ENCODE measurements at regions of chr4 and their contacts with region 1.

Region 1: GRCh38 chr4:39977489-39978377 is at the start of gene PDS5A:
- DNase-seq: peak; percentile 87 to 91
- H3K4me3 ChIP-seq: peak within 1 kb of the TSS; percentile 90 to 95 (median 95)
- H3K27ac ChIP-seq: peak within 1 kb of the TSS; percentile 96 to 98 (median 98)
- H3K4me1 ChIP-seq: peaks cover 10 to 11% of the 10 kb centered on the region in 2 donors
- H3K27me3 ChIP-seq: no peaks in the 10 kb centered on the region
- CTCF ChIP-seq: peak; percentile 41 to 99 (median 88)
- POLR2A ChIP-seq: peak; percentile 49 to 85
- total RNA-seq, gene PDS5A: 92.3 to 133 (median 103) TPM

Region 2: DNA sequence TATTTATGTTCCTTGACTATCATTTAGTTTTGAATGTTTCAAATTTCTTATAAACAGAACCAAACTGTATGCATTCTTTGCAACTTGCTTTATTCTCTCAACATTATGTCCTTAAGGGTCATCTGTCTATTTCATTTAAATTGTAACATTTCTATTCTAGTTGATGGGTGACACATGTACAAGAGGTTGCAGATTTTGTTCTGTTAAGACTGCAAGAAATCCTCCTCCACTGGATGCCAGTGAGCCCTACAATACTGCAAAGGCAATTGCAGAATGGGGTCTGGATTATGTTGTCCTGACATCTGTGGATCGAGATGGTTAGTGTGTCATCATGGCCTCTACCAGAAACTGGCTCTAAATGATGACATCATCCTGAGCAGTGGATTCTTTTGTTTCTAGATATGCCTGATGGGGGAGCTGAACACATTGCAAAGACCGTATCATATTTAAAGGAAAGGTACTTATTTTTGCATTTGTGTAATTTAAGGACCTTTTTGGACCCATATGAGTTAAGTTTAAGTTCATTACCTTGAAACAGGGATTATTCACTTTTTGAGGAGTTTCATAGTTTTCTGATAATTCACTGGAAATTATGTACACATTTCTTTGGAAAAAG is 512.7 kb before region 1 on chr4:
- intact Hi-C with region 1: loop called (anchors 5 kb)
- DNase-seq: no peak
- H3K4me3 ChIP-seq: no peak overlapping the region
- H3K27ac ChIP-seq: no peak overlapping the region
- H3K4me1 ChIP-seq: peaks cover 0 to under 1% of the 10 kb centered on the region in 2 donors
- H3K27me3 ChIP-seq: no peaks in the 10 kb centered on the region
- CTCF ChIP-seq: no peak
- POLR2A ChIP-seq: no peak

Region 3: GRCh38 chr4:39527273-39528060 is 450.3 kb before region 1 on chr4 and contains the start of gene UGDH:
- intact Hi-C with region 1: loop called (anchors 10 kb)
- DNase-seq: peak; percentile 99
- H3K4me3 ChIP-seq: peak within 1 kb of the TSS; percentile 42 to 81 (median 50)
- H3K27ac ChIP-seq: peak within 1 kb of the TSS; percentile 90 to 95 (median 90)
- H3K4me1 ChIP-seq: peaks cover 14 to 18% of the 10 kb centered on the region in 2 donors
- H3K27me3 ChIP-seq: no peaks in the 10 kb centered on the region
- CTCF ChIP-seq: peak in 2 of 6 experiments; percentile 8 to 9
- POLR2A ChIP-seq: peak; percentile 84 to 98
- total RNA-seq, gene UGDH: 40.1 to 58.7 (median 48.1) TPM

Region 4: GRCh38 chr4:39697740-39698423 is 279.9 kb before region 1 on chr4 and contains the start of gene UBE2K:
- intact Hi-C with region 1: loop called (anchors 5 kb)
- DNase-seq: peak; percentile 87 to 89
- H3K4me3 ChIP-seq: peak within 1 kb of the TSS; percentile 84 to 91 (median 85)
- H3K27ac ChIP-seq: peak within 1 kb of the TSS; percentile 93 to 97 (median 93)
- H3K4me1 ChIP-seq: peaks cover 10 to 21% of the 10 kb centered on the region in 2 donors
- H3K27me3 ChIP-seq: no peaks in the 10 kb centered on the region
- CTCF ChIP-seq: peak in 2 of 6 experiments; percentile 3 to 11
- POLR2A ChIP-seq: peak; percentile 29 to 89
- total RNA-seq, gene UBE2K: 27.1 to 48.5 (median 32.3) TPM